ENCODE measurements at regions of chr1 and their contacts with region 1.

Region 1: DNA sequence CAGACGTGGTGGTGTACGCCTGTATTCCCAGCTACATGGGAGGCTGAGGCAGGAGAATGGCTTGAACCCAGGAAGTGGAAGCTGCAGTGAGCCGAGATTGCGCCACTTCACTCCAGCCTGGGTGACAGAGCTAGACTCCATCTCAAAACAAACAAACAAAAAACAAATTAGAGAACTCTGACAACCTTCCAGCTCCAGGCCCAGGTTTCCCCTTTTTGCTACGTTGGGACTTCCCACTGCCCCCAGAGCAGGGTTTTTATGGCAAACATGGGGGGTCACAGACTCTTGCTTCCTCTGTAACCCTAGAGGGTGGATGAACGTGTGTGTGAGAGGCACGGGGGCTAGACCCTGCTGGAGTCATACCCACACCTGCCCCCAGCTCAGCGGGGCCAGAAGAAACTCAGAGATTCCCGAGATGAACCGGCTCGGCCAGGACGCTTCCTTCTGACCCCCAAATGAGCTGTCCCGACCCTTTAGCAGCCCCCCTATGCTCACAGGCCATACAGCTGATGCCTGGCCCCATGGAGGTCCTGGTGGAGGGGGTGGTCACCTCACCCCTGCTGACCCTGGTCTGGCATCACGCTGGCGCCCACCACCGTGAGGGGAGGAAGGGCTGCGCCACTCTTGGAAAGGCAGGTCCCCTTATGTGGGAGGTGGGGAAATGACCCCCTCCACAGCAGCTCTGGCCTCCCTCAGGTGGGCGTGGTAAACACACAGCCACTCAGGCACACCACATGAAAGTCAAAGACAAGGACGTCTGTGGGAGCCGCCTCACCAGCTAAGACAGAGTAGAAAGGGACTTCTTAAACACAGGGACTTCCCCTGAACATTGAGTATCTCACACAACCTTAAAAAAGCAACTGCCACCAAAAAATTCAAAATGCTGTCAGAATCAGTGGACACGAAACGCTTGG is 7.1 kb downstream of the GPR157 start:
- DNase-seq: peak; percentile 71
- ATAC-seq: peak; percentile 89
- H3K4me3 ChIP-seq: peak overlapping the region; percentile 53; the same call in 1 of the 2 replicates
- H3K27ac ChIP-seq: peak overlapping the region; percentile 74
- H3K4me1 ChIP-seq: peaks cover 40% of the 10 kb centered on the region
- H3K27me3 ChIP-seq: no peaks in the 10 kb centered on the region
- CTCF ChIP-seq: no peak
- EP300 ChIP-seq: peak; percentile 33 to 41; a peak in 1 of 4 replicates
- POLR2A ChIP-seq: no peak
- RAD21 ChIP-seq: no peak

Region 2: DNA sequence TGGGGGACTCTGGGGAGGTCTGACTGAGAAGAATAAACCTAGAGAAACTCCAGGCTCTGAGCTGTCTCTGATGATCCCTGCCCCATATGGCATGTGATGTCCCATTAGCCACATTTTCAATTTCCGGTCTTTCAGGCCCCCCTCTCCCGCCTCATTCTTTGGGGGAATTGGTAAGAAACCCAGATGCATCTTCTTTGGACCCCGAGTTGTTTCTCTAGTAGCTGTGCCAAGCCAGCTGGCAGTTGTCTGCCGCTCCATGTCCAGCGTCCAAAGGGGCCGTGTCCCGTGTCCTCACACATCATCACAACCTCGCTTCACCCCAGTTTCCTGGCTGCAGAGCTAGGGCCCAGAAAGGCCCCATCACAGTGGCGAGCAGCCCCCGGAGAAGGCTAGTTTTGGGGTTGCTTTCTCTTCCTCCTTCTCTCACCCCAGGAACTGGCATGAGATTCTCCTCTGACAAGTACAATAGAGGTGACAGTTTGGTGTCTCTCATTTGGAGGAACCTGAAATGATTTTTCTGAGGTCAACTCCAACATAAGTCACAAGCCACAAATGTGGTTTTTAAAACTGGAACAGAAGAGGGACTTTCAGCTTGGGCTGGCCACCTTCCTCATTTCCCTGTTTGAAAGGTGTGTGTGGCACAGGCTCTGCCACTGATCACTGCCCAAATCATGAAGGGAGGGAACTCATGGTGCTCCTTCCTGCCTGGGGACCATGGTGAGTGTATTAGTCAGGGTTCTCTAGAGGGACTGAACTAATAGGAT is 13.5 kb after region 1 on chr1:
- CTCF ChIA-PET with region 1: interaction called, 15 read pairs
- POLR2A ChIA-PET with region 1: interaction called, 19 read pairs
- RAD21 ChIA-PET with region 1: interaction called, 14 read pairs
- SMC1A ChIA-PET with region 1: interaction called, 23 read pairs
- in situ Hi-C with region 1: no loop called
- intact Hi-C with region 1: no loop called
- DNase-seq: peak; percentile 67
- ATAC-seq: peak; percentile 88
- H3K4me3 ChIP-seq: 0 out of 2 replicates have a peak overlapping the region, but pooled peaks have one; percentile 5
- H3K27ac ChIP-seq: 0 out of 2 replicates have a peak overlapping the region, but pooled peaks have one; percentile 17
- H3K4me1 ChIP-seq: peaks cover 28% of the 10 kb centered on the region
- H3K27me3 ChIP-seq: no peaks in the 10 kb centered on the region
- CTCF ChIP-seq: no peak
- EP300 ChIP-seq: no peak; a peak in 1 of 4 replicates
- POLR2A ChIP-seq: no peak
- RAD21 ChIP-seq: no peak